Activated CD8-positive, alpha-beta memory T cell treated with anti-CD3 and anti-CD28 coated beads, Interleukin-2, amount 10 ng/mL, durations not matched to agents 7 days and 5 days (primary cell): ENCODE measurements at regions of chr1 and their contacts with region 1.

Region 1: DNA sequence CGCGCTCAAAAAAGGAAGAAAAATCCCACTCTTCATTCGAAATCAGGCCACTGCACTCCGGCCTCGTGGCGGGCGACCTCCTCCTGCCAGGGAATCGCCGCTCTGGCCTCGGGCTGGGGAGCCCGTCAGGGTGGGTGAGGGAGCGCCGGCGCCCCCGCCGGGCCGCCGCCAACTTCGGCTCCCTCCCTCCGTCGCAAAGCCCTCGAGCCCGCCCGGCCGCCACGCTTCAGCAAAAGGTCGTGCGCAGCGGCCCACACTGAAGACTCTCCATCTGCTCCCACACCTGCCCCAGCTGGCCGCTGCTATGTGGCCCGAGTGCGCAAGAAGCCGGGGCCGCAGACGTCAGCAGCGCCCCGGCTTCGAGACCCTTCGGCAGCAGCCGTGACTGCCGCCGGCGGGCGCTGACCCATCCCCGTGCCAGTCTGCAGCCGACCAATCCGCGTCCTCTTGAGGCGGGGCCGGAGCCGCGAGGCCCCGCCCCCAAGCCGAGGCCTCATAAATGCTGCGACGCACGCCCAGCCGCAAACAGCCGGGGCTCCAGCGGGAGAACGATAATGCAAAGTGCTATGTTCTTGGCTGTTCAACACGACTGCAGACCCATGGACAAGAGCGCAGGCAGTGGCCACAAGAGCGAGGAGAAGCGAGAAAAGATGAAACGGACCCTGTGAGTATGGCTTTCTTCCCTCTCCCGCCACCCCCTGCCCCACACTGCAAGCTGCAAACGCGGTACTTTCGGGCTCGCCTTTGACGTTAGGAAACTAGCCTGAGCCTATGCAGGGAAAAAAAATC is at the start of gene RGS2:
- DNase-seq: peak; percentile 91
- ATAC-seq: peak; percentile 92
- H3K4me3 Mint-ChIP-seq: peak within 1 kb of the TSS; percentile 92
- H3K27ac Mint-ChIP-seq: peak within 1 kb of the TSS; percentile 94
- H3K4me1 Mint-ChIP-seq: peaks cover 31% of the 10 kb centered on the region
- H3K27me3 Mint-ChIP-seq: no peaks in the 10 kb centered on the region
- total RNA-seq, gene RGS2: 9.7 to 10.6 TPM

Region 2: GRCh38 chr1:192756314-192756713 is 52.4 kb before region 1 on chr1:
- CTCF ChIA-PET with region 1: no interaction called
- DNase-seq: no peak
- ATAC-seq: no peak
- H3K4me3 Mint-ChIP-seq: no peak overlapping the region
- H3K27ac Mint-ChIP-seq: no peak overlapping the region
- H3K4me1 Mint-ChIP-seq: peaks cover 3% of the 10 kb centered on the region
- H3K27me3 Mint-ChIP-seq: peaks cover 6% of the 10 kb centered on the region

Region 3: GRCh38 chr1:193013005-193013404 is 204.3 kb after region 1 on chr1:
- CTCF ChIA-PET with region 1: interaction called, 15 read pairs
- DNase-seq: no peak
- ATAC-seq: no peak
- H3K4me3 Mint-ChIP-seq: no peak overlapping the region
- H3K27ac Mint-ChIP-seq: no peak overlapping the region
- H3K4me1 Mint-ChIP-seq: no peaks in the 10 kb centered on the region
- H3K27me3 Mint-ChIP-seq: no peaks in the 10 kb centered on the region

Region 4: DNA sequence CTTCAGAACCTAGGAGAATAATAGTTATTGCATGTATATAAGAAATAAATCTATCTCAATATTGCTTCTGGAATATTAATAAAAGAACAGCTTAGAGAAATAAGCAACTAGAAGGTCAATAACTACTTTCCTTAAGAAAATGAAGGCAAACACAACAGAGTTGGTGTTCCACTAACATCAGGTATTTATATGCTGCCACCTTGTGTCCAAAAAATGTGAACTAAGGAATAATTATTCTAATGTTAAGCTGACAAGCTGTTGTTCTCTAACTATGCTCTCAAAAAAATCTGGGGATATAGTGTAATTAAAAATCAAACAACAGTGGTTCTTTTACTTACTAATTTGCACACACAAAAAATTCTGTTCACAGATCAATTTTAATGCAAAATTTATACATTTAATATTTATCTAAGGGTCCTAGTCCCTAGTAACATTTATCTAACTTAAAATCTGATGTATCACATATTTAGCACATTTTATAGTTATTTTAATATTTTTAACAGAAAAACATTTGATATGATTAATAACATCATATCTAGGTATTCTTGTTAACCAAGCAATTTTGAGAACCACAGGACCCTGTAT is 210.8 kb after region 1 on chr1:
- CTCF ChIA-PET with region 1: interaction called, 34 read pairs
- DNase-seq: no peak
- ATAC-seq: peak; percentile 63
- H3K4me3 Mint-ChIP-seq: no peak overlapping the region
- H3K27ac Mint-ChIP-seq: no peak overlapping the region
- H3K4me1 Mint-ChIP-seq: no peaks in the 10 kb centered on the region
- H3K27me3 Mint-ChIP-seq: no peaks in the 10 kb centered on the region